Prostate gland (tissue), 2 donors: ENCODE measurements at regions of chr4 and their contacts with region 1.

Region 1: DNA sequence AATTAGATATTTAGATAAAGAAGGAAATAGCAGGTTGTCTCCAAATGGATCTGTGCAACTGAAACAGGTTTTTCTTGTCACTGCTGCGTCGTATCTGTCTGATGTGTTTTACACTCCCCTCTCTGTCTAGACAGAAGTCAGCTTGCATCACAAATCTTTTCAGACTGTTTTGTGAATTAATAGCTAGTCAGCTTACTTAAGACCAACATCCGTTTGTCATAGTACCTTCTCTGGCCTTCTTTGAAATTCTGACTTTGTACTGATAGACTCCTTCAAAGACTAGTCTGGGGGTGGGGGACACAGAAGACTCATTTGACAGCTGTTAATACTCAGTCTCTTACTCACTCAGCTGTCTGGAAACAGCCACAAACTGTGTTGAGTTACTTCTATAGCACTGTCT is 197.8 kb downstream of the PALLD start:
- DNase-seq: peak; percentile 23
- H3K4me3 ChIP-seq: no peak overlapping the region
- H3K27ac ChIP-seq: no peak overlapping the region
- H3K4me1 ChIP-seq: no peaks in the 10 kb centered on the region
- H3K27me3 ChIP-seq: no peaks in the 10 kb centered on the region
- CTCF ChIP-seq: no peak
- POLR2A ChIP-seq: no peak

Region 2: GRCh38 chr4:168514249-168514852 is 180.3 kb before region 1 on chr4:
- intact Hi-C with region 1: loop called (anchors 10 kb)
- DNase-seq: no peak
- H3K4me3 ChIP-seq: no peak overlapping the region
- H3K27ac ChIP-seq: no peak overlapping the region
- H3K4me1 ChIP-seq: no peaks in the 10 kb centered on the region
- H3K27me3 ChIP-seq: no peaks in the 10 kb centered on the region
- CTCF ChIP-seq: peak; percentile 30 to 48 (median 44)
- POLR2A ChIP-seq: no peak

Region 3: DNA sequence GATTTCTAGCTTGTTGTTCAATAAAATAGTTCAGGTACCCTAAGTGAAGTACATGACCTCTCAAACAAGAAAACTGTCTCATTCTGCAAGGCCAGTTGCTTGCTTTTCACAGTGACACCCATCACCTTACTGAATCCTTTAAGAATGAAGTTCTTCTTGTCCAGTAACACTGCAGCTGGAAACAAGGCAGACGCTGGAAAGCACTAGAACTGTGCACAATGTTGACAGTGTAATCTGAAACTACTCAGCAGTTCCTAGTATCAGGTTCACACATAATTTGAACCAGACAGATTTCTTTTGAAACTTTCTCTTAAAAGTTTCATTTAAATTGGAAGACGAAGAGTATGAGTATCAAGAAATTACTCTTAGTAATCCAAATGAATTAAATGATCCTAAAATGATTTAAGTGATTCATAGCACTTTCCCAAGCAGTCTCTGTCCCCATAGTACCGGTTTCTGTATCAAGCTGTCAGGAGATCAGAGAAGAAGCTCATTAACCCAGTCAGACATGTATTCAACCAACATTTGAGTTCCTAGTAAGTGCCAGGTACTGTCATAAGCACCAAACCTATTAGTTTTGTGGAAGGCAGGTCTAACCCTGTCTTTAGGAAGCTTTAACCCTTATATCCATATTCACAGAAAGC is 134.3 kb before region 1 on chr4:
- intact Hi-C with region 1: no loop called
- DNase-seq: peak; percentile 60
- H3K4me3 ChIP-seq: no peak overlapping the region
- H3K27ac ChIP-seq: peak overlapping the region; percentile 50 to 77
- H3K4me1 ChIP-seq: no peaks in the 10 kb centered on the region
- H3K27me3 ChIP-seq: no peaks in the 10 kb centered on the region
- CTCF ChIP-seq: no peak
- POLR2A ChIP-seq: no peak

Region 4: DNA sequence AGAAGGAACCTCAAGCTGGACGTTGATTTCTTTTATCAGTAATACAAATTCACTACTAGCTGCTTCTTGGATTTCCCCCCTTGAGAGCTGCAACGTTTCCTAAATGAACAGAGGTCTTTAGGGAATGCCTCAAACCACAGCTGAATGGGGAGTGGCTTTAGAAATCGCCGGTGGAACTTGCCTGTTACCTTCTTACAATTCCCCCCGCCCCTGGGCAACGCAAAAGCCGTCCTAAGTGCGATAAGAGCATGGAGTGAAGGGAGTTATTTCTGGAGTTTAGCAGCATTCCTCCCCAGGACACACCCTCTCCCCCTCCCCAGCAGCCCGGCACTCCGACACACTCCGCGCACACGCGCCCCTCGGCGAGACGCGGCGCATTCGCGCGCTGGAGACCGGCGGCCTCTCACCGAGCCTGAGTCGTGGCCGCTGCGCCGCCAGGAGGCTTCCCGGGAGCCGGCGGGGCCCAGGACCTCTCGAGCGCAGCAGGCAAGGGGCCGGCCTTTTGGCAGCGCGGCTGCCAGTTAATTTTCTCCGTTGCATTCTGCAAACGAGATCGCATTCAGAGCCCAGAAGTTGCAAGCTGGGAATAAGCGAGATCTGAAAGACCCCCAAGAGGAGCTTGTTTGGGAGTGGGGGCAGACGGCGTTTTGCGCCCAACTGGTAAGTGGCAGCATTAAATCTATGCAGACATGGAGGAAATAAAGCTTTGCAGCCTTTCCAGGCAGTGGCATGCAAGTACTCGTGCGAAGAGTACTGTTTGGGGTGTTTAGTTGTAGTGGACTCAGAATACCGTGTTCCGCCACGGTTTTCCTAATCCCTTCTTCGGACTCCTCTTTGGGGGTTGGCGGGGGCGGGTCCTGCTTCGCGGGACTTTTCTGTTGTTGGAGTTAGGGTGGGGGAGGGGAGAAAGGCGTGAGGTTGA is 63.1 kb before region 1 on chr4:
- intact Hi-C with region 1: loop called (anchors 5 kb)
- DNase-seq: peak; percentile 34
- H3K4me3 ChIP-seq: peak overlapping the region; percentile 24 to 35
- H3K27ac ChIP-seq: peak overlapping the region; percentile 52 to 57
- H3K4me1 ChIP-seq: no peaks in the 10 kb centered on the region
- H3K27me3 ChIP-seq: no peaks in the 10 kb centered on the region
- CTCF ChIP-seq: peak in 2 of 4 experiments; percentile 36 to 48
- POLR2A ChIP-seq: no peak

Region 5: DNA sequence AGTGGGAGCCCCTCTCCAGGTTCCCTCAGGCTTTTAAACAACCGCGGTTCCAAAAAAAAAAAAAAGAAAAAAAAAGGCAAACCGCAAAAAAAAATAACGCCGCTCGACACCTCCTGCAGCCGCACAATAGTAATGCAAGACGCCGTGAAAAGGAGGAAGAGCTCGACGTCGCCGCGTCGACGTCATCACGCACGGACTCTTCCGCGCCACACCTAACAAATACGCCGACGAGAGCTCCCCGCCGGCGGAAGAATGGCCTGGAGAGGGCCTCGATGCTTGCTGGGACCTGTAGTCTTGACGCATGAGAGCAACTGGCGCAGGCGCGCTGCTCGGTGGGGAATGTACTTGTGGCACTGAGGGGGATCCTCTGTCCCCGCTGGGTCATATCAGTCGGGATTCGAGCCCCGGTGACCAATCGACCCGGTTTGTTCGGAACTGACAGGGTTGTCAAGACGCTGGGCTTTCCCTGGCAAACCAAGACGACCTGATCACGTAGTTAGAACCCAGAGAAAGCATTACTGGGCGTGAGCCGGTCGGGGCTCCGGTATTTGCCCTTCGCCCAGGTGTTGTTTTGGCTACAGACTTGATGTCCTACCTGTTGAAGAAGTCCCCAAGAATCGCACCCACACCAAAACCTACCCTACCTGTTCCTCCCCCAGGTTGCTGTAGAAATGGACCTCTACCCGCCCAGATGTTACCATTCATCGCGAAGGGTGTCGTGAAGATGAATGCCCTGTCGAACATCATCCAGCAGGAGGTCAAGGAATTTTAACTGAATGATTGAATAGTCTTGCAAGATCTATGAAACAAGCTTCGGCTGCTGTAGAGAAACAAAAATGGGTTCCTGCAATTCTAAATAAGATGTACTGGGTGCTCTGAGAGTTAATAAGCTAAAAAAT is 315.7 kb after region 1 on chr4 and contains the start of gene CBR4:
- intact Hi-C with region 1: loop called (anchors 10 kb)
- DNase-seq: peak; percentile 98
- H3K4me3 ChIP-seq: peak within 1 kb of the TSS; percentile 60 to 64
- H3K27ac ChIP-seq: peak within 1 kb of the TSS; percentile 89 to 90
- H3K4me1 ChIP-seq: no peaks in the 10 kb centered on the region
- H3K27me3 ChIP-seq: no peaks in the 10 kb centered on the region
- CTCF ChIP-seq: peak in 2 of 4 experiments; percentile 36 to 52
- POLR2A ChIP-seq: peak; percentile 72
- total RNA-seq, gene CBR4: 15.6 to 23.7 TPM